ENCODE measurements at regions of chr1 and their contacts with region 1.

Region 1: GRCh38 chr1:1906185-1907097 is 8.6 kb upstream of the CALML6 start:
- DNase-seq: peak; percentile 72 to 82
- H3K4me3 ChIP-seq: no peak overlapping the region
- H3K27ac ChIP-seq: no peak overlapping the region
- H3K4me1 ChIP-seq: peaks cover 6 to 7% of the 10 kb centered on the region in 2 donors
- H3K27me3 ChIP-seq: no peaks in the 10 kb centered on the region
- CTCF ChIP-seq: peak; percentile 73 to 94 (median 87)
- POLR2A ChIP-seq: no peak

Region 2: GRCh38 chr1:1763657-1764616 is 142.5 kb before region 1 on chr1:
- intact Hi-C with region 1: loop called (anchors 5 kb)
- DNase-seq: peak in 1 of 2 donors; percentile 86
- H3K4me3 ChIP-seq: no peak overlapping the region
- H3K27ac ChIP-seq: peak overlapping the region; percentile 68 to 75
- H3K4me1 ChIP-seq: no peaks in the 10 kb centered on the region
- H3K27me3 ChIP-seq: no peaks in the 10 kb centered on the region
- CTCF ChIP-seq: no peak
- POLR2A ChIP-seq: no peak

Measured in breast epithelium (tissue), 4 donors.